ENCODE measurements at regions of chr3 and their contacts with region 1.

Region 1: DNA sequence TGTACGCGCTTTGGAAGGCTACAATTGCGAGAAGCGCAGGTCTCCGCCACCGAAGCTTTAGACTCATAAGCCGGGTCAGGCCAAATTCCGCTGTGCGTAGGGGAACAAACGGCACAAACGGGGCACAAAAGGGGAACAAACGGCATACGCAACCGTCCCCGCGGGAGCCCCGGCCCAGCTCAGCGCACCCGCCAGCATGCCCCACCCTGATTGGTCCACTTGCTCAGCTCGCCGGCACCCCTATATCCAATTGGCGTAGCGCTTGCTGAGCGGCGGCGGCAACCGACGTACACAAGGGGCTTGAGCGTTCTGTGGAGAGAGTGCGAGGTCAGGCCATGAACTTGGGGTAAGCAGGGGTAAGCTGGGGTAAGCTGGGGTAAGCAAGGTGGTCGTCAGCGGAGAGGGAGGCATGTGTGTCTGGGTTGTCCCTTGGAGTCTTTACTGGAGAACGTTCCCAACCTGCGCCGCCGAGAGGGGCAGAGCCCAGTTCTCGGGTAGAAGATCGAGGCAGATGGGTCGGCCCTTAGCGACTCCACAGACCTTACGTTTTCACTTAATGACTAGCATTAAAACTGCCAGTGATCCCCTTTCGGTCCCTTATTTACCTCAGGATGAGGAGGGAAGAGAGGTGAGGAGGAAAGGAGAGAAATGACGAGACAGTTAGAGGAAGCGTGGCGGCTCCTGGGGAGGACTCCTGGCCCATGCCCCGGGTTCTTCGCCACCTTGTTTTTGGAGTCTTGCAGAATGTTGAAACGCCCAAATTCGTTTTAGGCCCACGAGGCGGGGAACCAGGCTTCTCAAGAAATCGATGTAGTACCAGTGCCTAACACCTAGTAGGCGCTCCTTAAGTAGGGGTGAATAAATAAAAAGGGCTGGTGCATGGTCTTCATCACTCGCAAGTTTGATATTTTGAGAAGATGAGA is at the start of gene CCDC66:
- DNase-seq: peak; percentile 92 to 95 (median 93)
- H3K4me3 ChIP-seq: peak within 1 kb of the TSS; percentile 90 to 91
- H3K4me3 Mint-ChIP-seq: peak within 1 kb of the TSS; percentile 95 to 100 (median 99)
- H3K27ac ChIP-seq: peak within 1 kb of the TSS; percentile 91
- H3K27ac Mint-ChIP-seq: peak within 1 kb of the TSS; percentile 98 to 100 (median 99)
- H3K4me1 ChIP-seq: peaks cover 24% of the 10 kb centered on the region
- H3K4me1 Mint-ChIP-seq: peaks cover 15 to 42% (median 29%) of the 10 kb centered on the region in 4 donors
- H3K27me3 ChIP-seq: no peaks in the 10 kb centered on the region
- H3K27me3 Mint-ChIP-seq: no peaks in the 10 kb centered on the region
- total RNA-seq, gene CCDC66: 93.4 to 104 TPM

Region 2: GRCh38 chr3:56086355-56086754 is 470.8 kb before region 1 on chr3:
- CTCF ChIA-PET with region 1: no interaction called
- POLR2A ChIA-PET with region 1: no interaction called
- intact Hi-C with region 1: no loop called
- DNase-seq: no peak
- H3K4me3 ChIP-seq: no peak overlapping the region
- H3K4me3 Mint-ChIP-seq: no peak overlapping the region
- H3K27ac ChIP-seq: no peak overlapping the region
- H3K27ac Mint-ChIP-seq: no peak overlapping the region
- H3K4me1 ChIP-seq: no peaks in the 10 kb centered on the region
- H3K4me1 Mint-ChIP-seq: no peaks in the 10 kb centered on the region
- H3K27me3 ChIP-seq: no peaks in the 10 kb centered on the region
- H3K27me3 Mint-ChIP-seq: no peaks in the 10 kb centered on the region

Region 3: GRCh38 chr3:56610669-56611335 is 53.6 kb after region 1 on chr3:
- CTCF ChIA-PET with region 1: interaction called, 11 read pairs
- POLR2A ChIA-PET with region 1: interaction called, 20 read pairs
- intact Hi-C with region 1: no loop called
- DNase-seq: peak in 1 of 5 donors; percentile 27
- H3K4me3 ChIP-seq: no peak overlapping the region
- H3K4me3 Mint-ChIP-seq: peak overlapping the region in 7 of 8 donors; percentile 13 to 69 (median 42)
- H3K27ac ChIP-seq: no peak overlapping the region
- H3K27ac Mint-ChIP-seq: peak overlapping the region; percentile 32 to 87 (median 82)
- H3K4me1 ChIP-seq: peaks cover 60% of the 10 kb centered on the region
- H3K4me1 Mint-ChIP-seq: peaks cover 60 to 74% (median 66%) of the 10 kb centered on the region in 4 donors
- H3K27me3 ChIP-seq: no peaks in the 10 kb centered on the region
- H3K27me3 Mint-ChIP-seq: no peaks in the 10 kb centered on the region

Region 4: GRCh38 chr3:56645407-56645806 is 88.2 kb after region 1 on chr3:
- CTCF ChIA-PET with region 1: no interaction called
- POLR2A ChIA-PET with region 1: interaction called, 6 read pairs
- intact Hi-C with region 1: loop called (anchors 5 kb)
- DNase-seq: no peak
- H3K4me3 ChIP-seq: no peak overlapping the region
- H3K4me3 Mint-ChIP-seq: no peak overlapping the region
- H3K27ac ChIP-seq: no peak overlapping the region
- H3K27ac Mint-ChIP-seq: peak overlapping the region in 1 of 7 donors; percentile 11
- H3K4me1 ChIP-seq: no peaks in the 10 kb centered on the region
- H3K4me1 Mint-ChIP-seq: peaks cover 19 to 34% (median 24%) of the 10 kb centered on the region in 4 donors
- H3K27me3 ChIP-seq: no peaks in the 10 kb centered on the region
- H3K27me3 Mint-ChIP-seq: no peaks in the 10 kb centered on the region

Region 5: GRCh38 chr3:56693750-56694149 is 136.6 kb after region 1 on chr3:
- CTCF ChIA-PET with region 1: no interaction called
- POLR2A ChIA-PET with region 1: interaction called, 11 read pairs
- intact Hi-C with region 1: loop called (anchors 1 kb)
- DNase-seq: no peak
- H3K4me3 ChIP-seq: no peak overlapping the region
- H3K4me3 Mint-ChIP-seq: peak overlapping the region in 7 of 8 donors; percentile 37 to 86 (median 80)
- H3K27ac ChIP-seq: no peak overlapping the region
- H3K27ac Mint-ChIP-seq: peak overlapping the region in 6 of 7 donors; percentile 3 to 86 (median 70)
- H3K4me1 ChIP-seq: peaks cover 38% of the 10 kb centered on the region
- H3K4me1 Mint-ChIP-seq: peaks cover 36 to 46% (median 41%) of the 10 kb centered on the region in 4 donors
- H3K27me3 ChIP-seq: no peaks in the 10 kb centered on the region
- H3K27me3 Mint-ChIP-seq: no peaks in the 10 kb centered on the region

Measured in CD4-positive, alpha-beta memory T cell (primary cell).